ENCODE measurements at regions of chr11 and their contacts with region 1.

Region 1: DNA sequence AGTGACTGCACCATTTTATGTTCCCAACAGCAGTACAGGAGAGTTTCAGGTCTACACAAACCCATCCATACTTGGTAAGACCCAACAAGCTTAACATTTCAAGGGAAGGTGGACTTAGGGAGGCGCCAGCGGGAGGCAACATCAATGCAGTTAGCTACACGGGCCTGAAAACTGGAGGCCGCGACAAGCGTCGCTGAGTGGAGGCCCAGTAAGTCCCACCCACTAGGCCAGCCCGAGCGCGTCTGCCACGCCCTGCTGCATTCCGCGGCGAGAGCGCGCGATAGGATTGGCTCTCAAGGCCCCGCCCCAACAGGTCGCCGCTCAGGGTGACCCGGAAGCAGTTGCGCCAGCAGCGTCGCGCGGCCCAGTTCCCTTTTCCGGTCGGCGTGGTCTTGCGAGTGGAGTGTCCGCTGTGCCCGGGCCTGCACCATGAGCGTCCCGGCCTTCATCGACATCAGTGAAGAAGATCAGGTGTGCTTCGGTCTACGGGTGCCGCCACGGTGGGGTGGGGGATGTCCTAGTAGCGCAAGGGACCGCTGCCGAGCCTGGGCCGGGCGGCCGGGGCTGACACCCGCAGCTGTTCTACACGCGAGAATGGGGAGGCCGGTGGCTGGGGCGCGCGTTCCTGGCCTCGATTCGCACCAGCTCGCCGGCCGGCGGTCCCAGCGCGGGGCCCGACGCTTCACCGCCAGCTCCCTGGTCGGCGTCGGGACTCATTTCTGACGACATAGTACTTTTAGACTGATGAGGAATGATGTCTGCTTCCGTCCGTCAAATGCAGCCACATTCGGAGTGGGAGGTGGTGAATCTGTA is at the start of gene EIF3M:
- DNase-seq: peak; percentile 97
- H3K4me3 Mint-ChIP-seq: peak within 1 kb of the TSS; percentile 95
- H3K27ac Mint-ChIP-seq: peak within 1 kb of the TSS; percentile 94
- H3K4me1 Mint-ChIP-seq: peaks cover 38% of the 10 kb centered on the region
- H3K27me3 Mint-ChIP-seq: no peaks in the 10 kb centered on the region
- total RNA-seq, gene EIF3M: 342 to 358 TPM

Region 2: DNA sequence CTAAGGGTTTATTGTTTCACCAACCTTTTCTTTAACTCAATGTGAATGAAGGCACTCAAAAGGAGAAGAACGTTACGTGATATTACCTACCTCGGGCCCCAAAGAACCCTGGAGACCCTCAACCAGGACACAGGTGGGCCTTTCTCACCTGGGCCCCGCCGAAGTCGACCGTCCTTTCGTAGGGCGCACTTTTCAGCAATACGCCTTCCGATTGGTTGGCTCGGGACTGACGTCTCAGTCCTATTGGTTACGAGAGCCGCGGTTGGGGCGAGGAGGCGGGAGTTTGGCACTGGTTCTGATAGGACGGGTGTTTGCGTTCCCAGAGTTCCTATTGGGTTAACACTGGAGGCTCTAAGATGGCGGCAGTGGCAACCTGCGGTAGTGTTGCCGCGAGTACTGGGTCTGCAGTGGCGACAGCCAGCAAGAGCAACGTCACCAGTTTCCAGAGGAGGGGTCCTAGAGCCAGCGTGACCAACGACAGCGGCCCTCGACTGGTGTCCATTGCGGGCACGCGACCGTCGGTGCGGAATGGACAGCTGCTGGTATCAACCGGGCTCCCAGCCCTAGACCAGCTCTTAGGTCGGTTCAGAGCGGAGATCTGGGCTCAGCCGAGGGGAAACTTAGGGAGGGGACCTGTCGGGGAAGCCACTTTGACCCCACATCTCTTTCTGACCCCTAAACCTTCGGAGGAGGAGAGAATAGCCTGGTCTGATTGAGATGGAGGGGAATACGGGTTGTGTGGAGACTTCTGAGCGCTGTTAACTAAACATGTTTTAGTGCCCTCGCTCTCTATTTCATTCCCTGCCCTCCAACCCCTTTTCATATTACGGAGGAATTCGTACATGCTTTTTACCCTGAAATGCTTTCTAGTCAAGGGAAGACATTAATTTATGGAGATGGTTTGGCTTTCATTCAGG is 1074.0 kb before region 1 on chr11 and contains the starts of genes ELP4 and IMMP1L:
- CTCF ChIA-PET with region 1: no interaction called
- intact Hi-C with region 1: loop called (anchors 5 kb)
- DNase-seq: peak; percentile 98
- H3K4me3 Mint-ChIP-seq: peak within 1 kb of the TSS; percentile 99
- H3K27ac Mint-ChIP-seq: peak within 1 kb of the TSS; percentile 90
- H3K4me1 Mint-ChIP-seq: peaks cover 36% of the 10 kb centered on the region
- H3K27me3 Mint-ChIP-seq: no peaks in the 10 kb centered on the region
- total RNA-seq, gene ELP4: 20.8 to 23.8 TPM
- total RNA-seq, gene IMMP1L: 15.6 to 15.9 TPM

Region 3: GRCh38 chr11:32090545-32091373 is 492.9 kb before region 1 on chr11 and contains the start of gene RCN1:
- CTCF ChIA-PET with region 1: no interaction called
- intact Hi-C with region 1: loop called (anchors 5 kb)
- DNase-seq: peak; percentile 43
- H3K4me3 Mint-ChIP-seq: peak within 1 kb of the TSS; percentile 79
- H3K27ac Mint-ChIP-seq: peak within 1 kb of the TSS; percentile 86
- H3K4me1 Mint-ChIP-seq: peaks cover 39% of the 10 kb centered on the region
- H3K27me3 Mint-ChIP-seq: peaks cover 4% of the 10 kb centered on the region
- total RNA-seq, gene RCN1: 24.8 to 29.6 TPM

Region 4: DNA sequence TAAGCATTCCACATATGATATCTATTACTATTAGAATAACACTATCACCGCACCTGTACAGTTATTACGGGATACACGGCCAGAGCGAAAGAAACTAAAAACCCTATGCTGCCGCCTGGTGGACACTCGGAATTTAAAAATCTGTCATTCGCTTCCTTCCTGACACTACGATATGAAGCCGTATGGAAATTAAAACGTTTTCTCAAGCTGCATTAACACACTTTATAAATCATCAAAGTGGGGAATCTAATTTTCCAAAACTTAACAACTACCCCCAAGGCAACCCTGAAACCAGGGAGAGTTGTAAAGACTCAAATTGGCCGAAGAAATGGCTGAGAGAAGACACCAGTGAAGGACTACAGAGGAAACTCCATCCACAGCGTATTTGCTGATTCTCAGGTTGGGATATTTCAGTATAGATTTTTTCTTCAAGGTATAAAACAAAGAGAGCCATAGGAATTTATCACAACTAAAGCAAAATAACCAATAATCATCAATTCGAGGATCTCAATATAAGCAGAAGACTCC is 209.3 kb after region 1 on chr11:
- CTCF ChIA-PET with region 1: no interaction called
- intact Hi-C with region 1: loop called (anchors 5 kb)
- DNase-seq: peak; percentile 84
- H3K4me3 Mint-ChIP-seq: no peak overlapping the region
- H3K27ac Mint-ChIP-seq: no peak overlapping the region
- H3K4me1 Mint-ChIP-seq: peaks cover 9% of the 10 kb centered on the region
- H3K27me3 Mint-ChIP-seq: peaks cover 1% of the 10 kb centered on the region

Region 5: DNA sequence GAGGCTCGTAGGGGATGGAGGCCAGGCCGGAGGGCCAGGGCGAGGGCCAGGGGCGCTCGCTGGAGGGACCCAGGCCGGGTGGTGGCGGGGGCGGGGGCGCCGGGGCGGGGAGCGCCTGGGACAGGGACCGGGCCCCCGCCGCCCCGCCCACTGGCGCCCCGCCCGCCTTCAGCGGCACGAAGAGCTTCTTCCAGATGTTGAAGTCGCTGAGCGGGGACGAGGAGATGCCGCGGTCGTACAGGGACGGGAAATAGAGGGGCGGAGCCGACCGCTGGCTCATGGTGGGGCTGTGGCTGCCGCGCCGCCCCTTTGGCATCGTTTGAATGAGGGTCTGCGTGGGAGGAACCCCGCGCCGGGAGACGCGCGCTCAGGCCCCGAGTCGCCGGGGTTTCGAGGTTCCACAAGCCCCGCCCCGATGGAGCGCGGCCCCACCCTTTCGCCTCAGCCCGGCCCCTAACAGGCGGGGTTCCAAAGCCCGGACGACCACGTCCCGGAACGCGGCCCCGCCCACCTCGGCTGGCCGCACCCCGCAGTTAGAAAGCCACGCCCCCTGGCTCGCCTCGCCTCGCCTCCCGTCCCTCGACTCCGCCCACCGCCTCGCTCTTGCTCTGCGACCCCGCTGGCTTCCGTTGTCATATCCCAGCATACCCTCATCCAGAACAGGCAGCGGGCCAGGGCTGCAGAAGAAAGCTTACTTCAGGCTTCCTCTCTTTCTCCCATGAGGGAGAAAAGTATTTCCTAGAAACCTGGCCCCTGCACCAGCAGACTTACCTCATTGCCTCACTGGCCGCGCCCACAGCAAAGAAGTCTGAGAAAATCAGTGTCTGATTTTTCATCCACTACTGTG is 1117.0 kb after region 1 on chr11 and contains the start of gene C11orf91:
- CTCF ChIA-PET with region 1: no interaction called
- intact Hi-C with region 1: loop called (anchors 2 kb)
- DNase-seq: peak; percentile 94
- H3K4me3 Mint-ChIP-seq: peak within 1 kb of the TSS; percentile 85
- H3K27ac Mint-ChIP-seq: peak within 1 kb of the TSS; percentile 61
- H3K4me1 Mint-ChIP-seq: peaks cover 7% of the 10 kb centered on the region
- H3K27me3 Mint-ChIP-seq: peaks cover 8% of the 10 kb centered on the region
- total RNA-seq, gene C11orf91: not detected